ENCODE measurements at regions of chr10 and their contacts with region 1.

Region 1: DNA sequence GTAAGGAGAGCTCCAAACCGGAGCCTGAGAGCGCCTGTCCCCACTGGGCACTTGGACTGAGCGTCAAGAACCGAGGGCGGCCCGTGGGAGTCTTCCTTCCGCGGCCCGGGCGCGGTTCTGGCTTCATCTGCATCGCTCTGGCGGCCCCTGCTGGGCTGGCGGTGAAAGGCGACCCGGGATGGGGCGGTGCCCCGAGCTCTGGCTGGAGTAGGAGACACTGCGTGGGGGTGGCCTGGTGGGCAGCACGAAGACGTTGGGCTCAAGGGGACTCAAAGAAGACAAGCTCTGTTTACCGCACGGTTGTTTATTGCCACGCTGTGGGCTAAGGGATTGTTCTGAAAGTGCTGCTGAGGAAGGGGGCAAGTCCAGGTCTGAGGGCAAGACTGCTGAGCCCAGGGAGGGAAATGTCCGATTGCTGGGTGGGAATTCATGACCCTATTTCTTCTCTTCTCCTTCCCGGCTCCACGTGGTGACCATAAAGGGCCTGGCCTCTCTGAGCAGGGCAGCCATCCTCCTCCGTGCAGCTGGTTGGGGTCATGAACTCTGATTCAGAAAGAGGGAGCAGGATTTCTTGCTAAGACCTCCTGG is 29.8 kb downstream of the PLAU start:
- DNase-seq: peak; percentile 71
- H3K4me3 ChIP-seq: no peak overlapping the region
- H3K27ac ChIP-seq: peak overlapping the region; percentile 47
- H3K4me1 ChIP-seq: peaks cover 19% of the 10 kb centered on the region
- H3K27me3 ChIP-seq: no peaks in the 10 kb centered on the region
- CTCF ChIP-seq: peak; percentile 96 to 97
- POLR2A ChIP-seq: no peak

Region 2: DNA sequence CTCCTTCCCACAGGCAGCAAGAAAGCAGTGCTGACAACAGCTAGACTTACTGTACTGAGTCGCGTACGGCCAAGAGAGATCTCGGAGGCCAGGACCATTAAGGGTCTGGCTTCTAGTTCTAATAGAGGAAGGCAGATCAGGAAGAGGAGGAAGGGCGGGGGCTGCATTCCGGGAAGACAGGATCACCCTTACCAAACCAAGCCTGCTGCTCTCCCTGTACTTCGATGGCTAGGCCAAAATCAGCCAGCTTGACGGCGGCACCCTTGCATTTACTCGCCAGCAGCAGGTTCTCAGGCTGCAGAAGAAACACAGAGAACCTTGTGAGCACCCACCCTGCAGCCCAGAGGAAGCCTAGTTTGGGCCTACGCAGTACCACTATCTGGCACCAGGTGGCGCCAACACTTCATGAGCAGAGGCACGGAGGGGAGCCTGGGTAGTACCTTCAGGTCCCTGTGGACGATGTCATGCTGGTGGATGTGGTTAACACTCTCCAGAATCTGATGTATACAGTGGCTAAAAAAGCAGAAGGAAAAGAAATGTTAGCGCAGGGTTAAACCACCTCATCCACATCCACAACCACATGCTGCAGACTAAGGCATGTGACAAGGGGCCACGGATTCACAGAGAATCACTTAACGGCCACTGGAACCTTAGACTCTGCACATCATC is 91.8 kb before region 1 on chr10:
- CTCF ChIA-PET with region 1: interaction called, 7 read pairs
- POLR2A ChIA-PET with region 1: no interaction called
- dilution Hi-C with region 1: no loop called
- intact Hi-C with region 1: loop called (anchors 1 kb)
- DNase-seq: peak; percentile 76
- H3K4me3 ChIP-seq: no peak overlapping the region
- H3K27ac ChIP-seq: no peak overlapping the region
- H3K4me1 ChIP-seq: no peaks in the 10 kb centered on the region
- H3K27me3 ChIP-seq: no peaks in the 10 kb centered on the region
- CTCF ChIP-seq: peak; percentile 99
- POLR2A ChIP-seq: no peak

Region 3: GRCh38 chr10:73894245-73894971 is 46.3 kb before region 1 on chr10:
- CTCF ChIA-PET with region 1: interaction called, 439 read pairs
- POLR2A ChIA-PET with region 1: no interaction called
- dilution Hi-C with region 1: no loop called
- intact Hi-C with region 1: loop called (anchors 1 kb)
- DNase-seq: peak; percentile 90
- H3K4me3 ChIP-seq: no peak overlapping the region
- H3K27ac ChIP-seq: peak overlapping the region; percentile 80
- H3K4me1 ChIP-seq: peaks cover 23% of the 10 kb centered on the region
- H3K27me3 ChIP-seq: no peaks in the 10 kb centered on the region
- CTCF ChIP-seq: no peak
- POLR2A ChIP-seq: peak; percentile 45

Region 4: GRCh38 chr10:73908853-73909538 is 31.7 kb before region 1 on chr10:
- CTCF ChIA-PET with region 1: interaction called, 12 read pairs
- POLR2A ChIA-PET with region 1: no interaction called
- dilution Hi-C with region 1: no loop called
- intact Hi-C with region 1: loop called (anchors 1 kb)
- DNase-seq: peak; percentile 94
- H3K4me3 ChIP-seq: no peak overlapping the region
- H3K27ac ChIP-seq: peak overlapping the region; percentile 90
- H3K4me1 ChIP-seq: peaks cover 59% of the 10 kb centered on the region
- H3K27me3 ChIP-seq: no peaks in the 10 kb centered on the region
- CTCF ChIP-seq: no peak
- POLR2A ChIP-seq: peak; percentile 50

Region 5: DNA sequence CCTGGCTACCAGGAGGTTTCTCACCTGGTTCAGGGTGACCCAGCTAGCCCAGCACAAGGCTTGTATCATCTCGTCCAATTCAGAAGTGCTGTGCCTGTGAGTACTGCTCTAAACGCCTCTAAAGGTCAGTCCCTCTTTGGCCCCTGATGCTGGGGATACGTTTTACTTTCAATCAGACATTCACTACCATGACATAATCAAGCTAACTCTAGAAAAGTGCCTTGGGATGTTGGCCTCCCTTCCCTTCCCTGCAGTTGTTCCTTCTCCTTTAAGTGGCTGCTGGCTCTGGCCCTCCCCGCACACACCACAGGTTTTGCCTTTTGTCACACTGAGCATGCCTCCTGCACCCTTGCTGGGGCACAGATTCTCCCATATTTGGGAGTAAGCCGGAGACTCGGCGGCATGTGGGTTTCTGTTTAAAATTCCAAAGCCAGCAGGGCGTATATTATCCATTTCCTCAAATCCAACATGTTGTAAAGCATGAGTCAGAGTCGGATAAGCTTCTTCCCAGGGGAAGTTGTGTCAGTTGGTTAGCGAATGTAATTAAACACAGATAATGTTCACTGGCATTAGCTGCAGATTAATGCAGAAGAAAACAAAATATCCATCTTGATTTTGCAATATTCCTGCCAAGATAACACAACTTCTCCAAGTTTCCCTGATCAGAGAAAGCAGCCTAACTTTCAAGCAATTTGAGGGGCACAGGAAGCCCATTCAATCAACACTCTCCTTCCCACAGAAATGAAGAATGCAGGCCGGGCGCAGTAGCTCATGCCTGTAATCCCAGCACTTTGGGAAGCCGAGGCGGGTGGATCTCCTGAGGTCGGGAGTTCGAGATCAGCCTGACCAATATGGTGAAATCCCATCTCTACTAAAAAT is 25.4 kb after region 1 on chr10:
- CTCF ChIA-PET with region 1: interaction called, 7 read pairs
- POLR2A ChIA-PET with region 1: no interaction called
- dilution Hi-C with region 1: no loop called
- intact Hi-C with region 1: loop called (anchors 1 kb)
- DNase-seq: peak; percentile 94
- H3K4me3 ChIP-seq: peak overlapping the region in 1 of 3 experiments; percentile 7
- H3K27ac ChIP-seq: peak overlapping the region; percentile 73
- H3K4me1 ChIP-seq: peaks cover 30% of the 10 kb centered on the region
- H3K27me3 ChIP-seq: no peaks in the 10 kb centered on the region
- CTCF ChIP-seq: no peak
- POLR2A ChIP-seq: no peak

Region 6: DNA sequence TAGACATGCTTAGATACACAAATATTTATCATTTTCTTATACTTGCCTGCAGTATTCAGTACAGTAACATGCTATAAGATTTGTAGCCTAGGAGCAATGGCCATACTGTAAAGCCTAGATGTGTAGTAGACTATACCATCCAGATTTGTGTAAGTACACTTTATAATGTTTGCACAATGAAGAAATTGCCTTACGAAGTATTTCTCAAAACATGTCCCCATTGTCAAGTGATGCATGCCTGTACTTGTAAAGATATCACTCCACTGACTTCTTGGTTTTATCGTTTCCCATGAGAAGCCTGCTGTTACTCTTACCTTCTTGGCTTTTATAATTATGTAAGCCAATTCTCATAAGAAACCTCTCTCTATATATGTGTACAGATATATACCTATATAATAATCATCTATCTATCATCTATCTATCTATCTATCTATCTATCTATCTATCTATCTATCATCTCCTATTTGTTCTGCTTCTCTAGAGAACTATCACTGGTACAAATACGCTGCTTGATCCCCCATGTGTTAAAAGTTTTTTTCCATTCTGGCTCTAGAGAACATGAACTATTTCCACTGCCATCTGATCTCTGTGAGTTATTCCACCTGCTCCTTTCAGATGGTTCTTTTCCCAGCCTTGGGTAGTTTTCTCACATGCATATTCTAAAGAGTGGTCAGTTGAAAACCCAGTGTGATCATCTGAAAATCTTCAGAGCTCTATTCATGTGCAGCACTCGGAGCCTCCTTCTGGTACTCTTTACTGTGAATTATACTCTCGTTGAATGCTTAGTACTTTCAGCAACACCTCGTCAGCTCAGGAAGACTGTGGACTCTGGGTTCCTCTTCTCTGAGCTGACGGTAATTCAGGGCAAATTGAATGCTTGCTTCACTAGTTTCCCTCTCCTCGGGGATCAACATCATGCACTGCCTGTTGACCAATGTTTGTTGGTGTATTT is 42.6 kb after region 1 on chr10:
- CTCF ChIA-PET with region 1: no interaction called
- POLR2A ChIA-PET with region 1: no interaction called
- dilution Hi-C with region 1: no loop called
- intact Hi-C with region 1: no loop called
- DNase-seq: no peak
- H3K4me3 ChIP-seq: no peak overlapping the region
- H3K27ac ChIP-seq: no peak overlapping the region
- H3K4me1 ChIP-seq: no peaks in the 10 kb centered on the region
- H3K27me3 ChIP-seq: peaks cover 0 to 2% of the 10 kb centered on the region in 2 experiments
- CTCF ChIP-seq: no peak
- POLR2A ChIP-seq: no peak

Region 7: DNA sequence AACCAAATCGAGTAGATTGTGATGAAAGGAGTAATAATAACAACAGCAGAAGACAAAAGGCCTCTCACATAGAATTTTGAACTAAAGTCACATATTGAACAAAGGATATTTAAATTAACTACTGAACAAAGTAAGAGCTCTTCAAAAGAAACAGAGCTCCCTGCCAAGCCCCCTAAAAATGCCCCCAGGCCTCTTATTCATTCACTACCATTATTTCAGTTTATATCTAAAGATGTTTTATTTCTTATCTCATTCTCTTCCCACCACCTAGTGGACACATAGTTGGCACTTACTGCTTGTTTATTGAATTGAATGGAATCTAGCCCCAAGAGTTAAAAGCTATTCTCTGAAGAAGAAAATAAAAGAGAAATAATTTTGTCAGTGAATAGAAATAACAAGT is 94.6 kb after region 1 on chr10:
- CTCF ChIA-PET with region 1: interaction called, 9 read pairs
- POLR2A ChIA-PET with region 1: no interaction called
- dilution Hi-C with region 1: no loop called
- intact Hi-C with region 1: loop called (anchors 1 kb)
- DNase-seq: peak; percentile 51
- H3K4me3 ChIP-seq: no peak overlapping the region
- H3K27ac ChIP-seq: no peak overlapping the region
- H3K4me1 ChIP-seq: peaks cover 10% of the 10 kb centered on the region
- H3K27me3 ChIP-seq: no peaks in the 10 kb centered on the region
- CTCF ChIP-seq: peak; percentile 9 to 14
- POLR2A ChIP-seq: no peak